Posterior vena cava (tissue), 2 donors: ENCODE measurements at regions of chr17 and their contacts with region 1.

Region 1: GRCh38 chr17:67376737-67377487 is at the start of gene PITPNC1:
- DNase-seq: peak; percentile 96
- total RNA-seq, gene PITPNC1: 22.3 to 24.3 TPM

Region 2: DNA sequence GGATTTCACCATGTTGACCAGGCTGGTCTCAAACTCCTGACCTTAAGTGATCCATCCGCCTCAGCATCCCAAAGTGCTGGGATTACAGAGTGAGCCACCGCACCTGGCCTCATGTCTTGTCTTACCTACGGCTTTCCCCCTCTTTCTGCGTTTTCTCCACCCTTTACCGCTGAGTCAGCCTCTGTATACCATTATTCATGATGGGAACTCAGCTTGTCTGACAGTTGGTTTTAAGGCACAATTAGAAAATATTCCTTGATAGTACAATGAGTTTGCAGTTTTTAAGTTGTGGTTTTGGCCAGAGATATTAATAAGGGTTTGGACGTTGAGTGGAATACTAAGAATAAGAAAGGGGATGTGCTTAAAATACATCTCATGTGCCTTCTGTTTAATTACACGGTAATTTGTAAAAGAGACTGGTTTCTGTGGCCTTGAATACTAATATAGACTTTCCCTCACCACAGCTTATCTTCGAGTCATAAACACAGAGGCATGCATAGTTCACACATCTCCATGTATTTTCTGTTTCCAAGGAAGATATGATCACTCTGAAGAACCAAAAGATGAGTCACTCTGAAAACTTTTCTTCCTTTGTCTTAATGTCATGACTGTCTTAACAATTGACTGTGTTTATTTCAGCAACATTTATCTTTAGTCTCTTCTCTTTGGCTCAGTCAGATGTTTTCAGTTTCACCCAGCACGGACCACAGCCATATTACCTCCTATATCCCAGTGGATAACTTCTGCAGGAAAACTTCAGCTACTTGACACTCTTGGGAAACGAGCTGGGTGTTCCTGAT is 54.5 kb after region 1 on chr17:
- intact Hi-C with region 1: no loop called
- DNase-seq: no peak

Region 3: GRCh38 chr17:67475236-67475937 is 98.5 kb after region 1 on chr17:
- intact Hi-C with region 1: loop called (anchors 5 kb)
- DNase-seq: peak; percentile 91

Region 4: GRCh38 chr17:67629971-67630320 is 253.0 kb after region 1 on chr17:
- intact Hi-C with region 1: loop called in 1 of 2 experiments (anchors 5 kb)
- DNase-seq: no peak

Region 5: GRCh38 chr17:67689534-67690177 is 312.7 kb after region 1 on chr17:
- intact Hi-C with region 1: loop called (anchors 2 to 5 kb)
- DNase-seq: no peak